PC-3 (cell line): ENCODE measurements at regions of chr18 and their contacts with region 1.

Region 1: DNA sequence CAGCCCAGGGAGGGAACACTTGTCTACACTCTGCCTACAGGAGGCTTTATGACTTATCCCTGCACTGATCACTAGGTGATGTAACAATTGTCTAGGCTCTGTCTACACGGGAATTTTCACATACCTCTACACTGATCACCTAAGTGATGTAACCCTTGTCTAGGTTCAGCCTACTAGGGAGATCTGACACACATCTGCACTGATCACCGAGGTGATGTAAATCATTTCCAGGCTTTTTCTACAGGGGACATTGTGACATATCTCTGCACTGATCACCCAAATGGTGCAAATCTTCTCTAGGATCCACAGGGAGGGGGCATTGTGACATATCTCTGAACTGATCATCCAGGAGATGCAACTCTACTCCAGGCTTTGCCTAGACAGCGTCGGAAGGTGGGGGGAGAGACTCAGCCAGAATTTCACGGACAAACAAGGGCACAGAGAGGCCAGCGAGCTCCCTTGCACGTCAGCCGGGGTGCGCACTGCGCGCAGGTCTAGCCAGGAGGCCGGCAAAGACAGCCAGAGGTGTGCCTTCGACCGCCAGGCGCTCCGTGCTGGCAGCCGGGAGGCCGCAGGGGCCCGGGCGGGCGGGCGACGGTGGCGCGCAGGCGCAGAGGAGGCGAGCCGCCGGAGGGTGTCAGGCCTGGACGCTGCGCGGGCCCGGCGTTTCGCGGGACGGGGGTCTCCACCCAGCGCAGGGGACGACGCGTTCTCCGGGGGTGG is 46.9 kb upstream of the USP14 start:
- DNase-seq: peak; percentile 77
- ATAC-seq: peak; percentile 74
- H3K4me3 ChIP-seq: peak overlapping the region; percentile 60
- H3K27ac ChIP-seq: no peak overlapping the region; the same call in 1 of the 2 replicates
- H3K4me1 ChIP-seq: peaks cover 4% of the 10 kb centered on the region; the same call in 1 of the 2 replicates
- H3K27me3 ChIP-seq: no peaks in the 10 kb centered on the region
- CTCF ChIP-seq: no peak

Region 2: DNA sequence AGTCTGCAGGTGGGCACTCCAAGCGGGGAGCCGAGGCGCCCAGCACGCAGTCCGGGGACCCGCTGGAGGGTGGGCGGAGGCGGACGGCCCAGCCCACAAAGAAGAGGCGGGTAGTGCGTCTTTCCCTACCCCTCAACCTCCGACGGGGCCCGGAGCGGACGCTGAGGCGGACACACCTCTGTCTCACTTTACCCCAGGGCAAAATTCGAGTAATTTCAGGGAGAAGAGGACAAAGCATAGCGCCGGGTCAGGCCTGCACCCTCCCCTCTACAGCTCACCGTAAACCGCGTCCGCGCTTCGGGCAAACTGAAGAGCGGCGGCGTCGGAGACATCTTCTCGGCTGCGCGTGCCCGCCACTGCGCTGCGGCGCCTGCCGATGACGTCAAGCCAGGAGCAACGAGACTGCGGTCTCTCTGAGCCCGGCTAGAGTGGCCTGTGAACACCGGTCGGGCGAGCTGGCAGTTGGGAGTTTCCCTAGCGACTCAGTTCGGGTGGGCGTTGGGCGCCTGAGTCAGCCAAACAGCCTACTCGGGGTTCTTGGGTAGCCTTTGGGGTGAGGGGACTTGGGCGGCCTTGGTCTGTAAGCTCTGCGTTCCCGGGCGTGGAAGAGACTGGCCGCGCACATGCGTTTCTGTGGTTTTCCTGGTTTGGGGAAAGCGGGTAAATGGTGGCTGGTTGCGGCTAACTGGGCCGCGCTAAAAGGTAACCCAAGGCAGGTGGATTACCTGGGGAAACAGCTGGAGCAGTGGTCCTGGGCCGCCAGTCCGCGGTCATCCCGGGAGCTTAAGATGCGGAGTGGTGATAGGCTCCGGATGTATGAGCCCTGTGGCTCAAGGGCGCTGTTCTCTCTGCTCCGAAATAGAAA is 156.5 kb after region 1 on chr18 and contains the start of gene THOC1:
- CTCF ChIA-PET with region 1: no interaction called
- POLR2A ChIA-PET with region 1: no interaction called
- intact Hi-C with region 1: loop called (anchors 5 kb)
- DNase-seq: peak; percentile 94
- ATAC-seq: peak; percentile 93
- H3K4me3 ChIP-seq: peak within 1 kb of the TSS; percentile 92
- H3K27ac ChIP-seq: peak within 1 kb of the TSS; percentile 78
- H3K4me1 ChIP-seq: peaks cover 12% of the 10 kb centered on the region
- H3K27me3 ChIP-seq: no peaks in the 10 kb centered on the region
- CTCF ChIP-seq: no peak
- total RNA-seq, gene THOC1: 29.4 and 43.5 TPM in 2 replicates